ENCODE measurements at regions of chr4 and their contacts with region 1.

Region 1: GRCh38 chr4:76430519-76431388 is 4.3 kb upstream of the SHROOM3 start:
- DNase-seq: no peak
- H3K4me3 Mint-ChIP-seq: no peak overlapping the region
- H3K27ac Mint-ChIP-seq: no peak overlapping the region
- H3K4me1 Mint-ChIP-seq: no peaks in the 10 kb centered on the region
- H3K27me3 Mint-ChIP-seq: peaks cover 31% of the 10 kb centered on the region

Region 2: DNA sequence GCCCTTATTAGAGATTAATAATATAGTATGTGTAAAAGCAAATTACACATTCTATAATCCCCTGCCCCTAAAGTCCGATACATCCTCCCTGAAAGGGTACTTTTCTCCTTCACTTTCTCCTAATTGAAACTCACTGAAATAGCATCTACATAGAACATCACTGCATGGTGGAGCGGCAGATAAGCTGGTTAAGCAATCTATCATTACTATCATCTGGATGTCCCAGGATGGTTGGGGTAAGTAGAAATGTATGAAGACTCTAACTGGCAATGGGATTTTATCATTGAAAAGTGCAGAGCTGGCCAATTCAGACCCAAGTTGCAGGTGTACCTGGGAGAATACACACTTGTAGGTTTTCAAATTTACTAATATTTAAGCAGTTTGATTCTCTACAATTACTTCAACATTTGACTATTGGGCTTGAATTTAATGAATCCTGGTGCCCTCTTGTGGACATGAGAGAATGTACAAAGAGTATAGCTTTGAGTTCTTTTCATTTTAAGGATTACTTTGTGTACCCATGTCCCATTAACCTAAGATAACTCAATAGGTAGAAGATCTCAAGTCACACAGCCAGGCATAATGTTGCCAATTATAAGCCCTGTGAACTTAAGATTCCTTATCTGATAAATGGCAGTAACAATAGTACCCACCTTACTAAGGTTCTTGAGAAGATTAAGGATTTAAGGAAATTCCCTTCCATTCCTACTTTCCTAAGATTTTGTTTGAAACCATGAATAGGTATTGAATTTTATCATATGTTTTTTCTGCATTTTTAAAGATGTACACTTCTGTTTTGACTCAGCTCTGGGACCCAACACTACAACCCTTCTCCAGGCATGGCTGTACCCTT is 74.1 kb after region 1 on chr4:
- intact Hi-C with region 1: loop called (anchors 2 kb)
- DNase-seq: no peak
- H3K4me3 Mint-ChIP-seq: no peak overlapping the region
- H3K27ac Mint-ChIP-seq: no peak overlapping the region
- H3K4me1 Mint-ChIP-seq: no peaks in the 10 kb centered on the region
- H3K27me3 Mint-ChIP-seq: peaks cover 6% of the 10 kb centered on the region

Region 3: DNA sequence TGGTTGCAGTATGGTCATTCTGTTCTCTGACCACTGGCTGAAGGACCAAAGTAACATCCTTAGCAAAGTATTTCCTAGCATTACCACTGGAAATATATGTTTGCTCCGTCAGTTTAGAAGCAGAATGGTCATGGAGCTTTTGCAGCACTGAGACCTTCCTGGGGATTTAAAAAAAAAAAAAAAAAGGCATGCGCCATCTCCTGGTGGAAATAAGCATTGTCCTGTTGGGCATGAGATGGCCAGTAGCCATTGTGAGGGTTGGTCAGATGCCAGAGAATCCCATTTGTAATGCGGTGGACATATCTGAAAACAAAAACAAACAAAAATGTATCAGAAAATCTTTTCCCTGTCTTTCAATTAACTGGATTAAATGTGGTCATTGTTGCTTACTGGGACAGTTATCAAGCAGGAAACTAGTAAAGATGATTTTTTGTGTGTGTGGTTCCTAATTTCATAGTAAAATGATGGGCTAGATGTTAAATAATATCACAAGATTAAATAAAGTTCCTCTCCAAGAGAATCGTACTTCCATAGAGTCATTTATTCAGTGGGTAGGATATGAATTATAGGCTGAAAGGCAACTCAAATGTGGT is 327.6 kb after region 1 on chr4:
- intact Hi-C with region 1: loop called (anchors 5 kb)
- DNase-seq: no peak
- H3K4me3 Mint-ChIP-seq: no peak overlapping the region
- H3K27ac Mint-ChIP-seq: no peak overlapping the region
- H3K4me1 Mint-ChIP-seq: peaks cover 3% of the 10 kb centered on the region
- H3K27me3 Mint-ChIP-seq: peaks cover 21% of the 10 kb centered on the region

Region 4: DNA sequence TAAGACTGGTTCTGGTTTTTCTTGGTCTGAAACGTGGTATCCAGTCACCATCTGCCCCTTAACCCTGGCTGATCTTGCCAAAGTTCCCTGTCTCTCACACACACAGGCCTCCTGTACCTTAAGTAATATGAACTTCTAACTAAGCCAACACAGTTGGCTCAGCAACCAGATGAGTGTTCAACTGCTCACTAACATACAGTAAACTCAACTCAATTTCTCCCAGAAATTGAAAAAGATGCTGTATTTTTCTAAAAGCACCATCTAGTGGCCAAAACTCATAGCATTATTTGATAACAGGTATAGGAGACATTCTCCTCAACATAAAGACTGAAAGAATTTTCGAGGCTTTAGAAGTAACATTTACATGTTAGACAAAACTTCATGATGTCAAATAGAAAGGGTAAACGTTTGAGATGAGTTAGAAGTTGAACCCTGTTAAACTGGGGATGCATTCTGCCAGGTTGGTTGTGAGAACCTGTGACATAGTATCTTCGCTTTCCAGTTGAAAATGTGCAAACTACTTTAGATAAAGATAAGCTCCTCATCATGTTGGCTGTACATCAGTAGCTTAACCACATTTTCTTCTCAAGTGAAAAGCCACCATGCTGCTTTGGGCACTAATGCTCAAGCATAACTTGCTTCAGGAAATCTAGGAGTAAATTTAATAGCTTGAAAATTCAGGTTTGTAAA is 613.9 kb after region 1 on chr4:
- intact Hi-C with region 1: loop called (anchors 10 kb)
- DNase-seq: no peak
- H3K4me3 Mint-ChIP-seq: no peak overlapping the region
- H3K27ac Mint-ChIP-seq: peak overlapping the region; percentile 3
- H3K4me1 Mint-ChIP-seq: peaks cover 6% of the 10 kb centered on the region
- H3K27me3 Mint-ChIP-seq: peaks cover 5% of the 10 kb centered on the region